Activated CD4-positive, alpha-beta memory T cell treated with anti-CD3 and anti-CD28 coated beads, Interleukin-2, amount 10 ng/mL, durations not matched to agents 7 days and 5 days (primary cell): ENCODE measurements at regions of chr17 and their contacts with region 1.

Region 1: DNA sequence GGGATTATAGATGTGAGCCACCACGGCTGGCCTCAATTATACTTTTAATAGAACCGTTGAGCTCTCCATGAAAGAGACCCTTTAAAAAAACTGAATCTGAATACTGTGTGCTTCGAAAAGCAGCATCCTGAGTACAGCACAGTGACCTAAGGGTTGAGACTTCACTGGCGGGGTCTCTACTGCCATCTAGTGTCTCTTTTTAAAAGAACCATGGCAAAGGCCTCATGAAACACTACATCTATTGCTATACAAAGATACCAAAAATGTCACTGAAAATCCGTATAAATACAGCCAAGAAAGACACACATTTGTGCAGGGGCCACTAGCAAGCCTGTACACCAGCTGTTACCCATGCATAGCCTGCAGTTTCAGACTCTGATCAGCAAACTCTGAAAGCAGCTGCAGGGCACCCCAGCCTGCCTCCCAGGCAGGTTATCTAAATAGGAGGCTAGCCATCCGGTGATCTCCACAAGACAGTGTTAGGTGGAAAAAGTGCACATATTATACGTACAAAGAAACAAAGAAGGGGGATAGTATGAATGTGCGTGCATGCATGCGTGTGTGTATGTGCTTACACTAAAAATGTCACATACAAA is 35.3 kb downstream of the NPLOC4 start:
- DNase-seq: peak; percentile 46
- H3K4me3 Mint-ChIP-seq: no peak overlapping the region
- H3K27ac Mint-ChIP-seq: peak overlapping the region; percentile 48
- H3K4me1 Mint-ChIP-seq: peaks cover 10% of the 10 kb centered on the region
- H3K27me3 Mint-ChIP-seq: no peaks in the 10 kb centered on the region

Region 2: DNA sequence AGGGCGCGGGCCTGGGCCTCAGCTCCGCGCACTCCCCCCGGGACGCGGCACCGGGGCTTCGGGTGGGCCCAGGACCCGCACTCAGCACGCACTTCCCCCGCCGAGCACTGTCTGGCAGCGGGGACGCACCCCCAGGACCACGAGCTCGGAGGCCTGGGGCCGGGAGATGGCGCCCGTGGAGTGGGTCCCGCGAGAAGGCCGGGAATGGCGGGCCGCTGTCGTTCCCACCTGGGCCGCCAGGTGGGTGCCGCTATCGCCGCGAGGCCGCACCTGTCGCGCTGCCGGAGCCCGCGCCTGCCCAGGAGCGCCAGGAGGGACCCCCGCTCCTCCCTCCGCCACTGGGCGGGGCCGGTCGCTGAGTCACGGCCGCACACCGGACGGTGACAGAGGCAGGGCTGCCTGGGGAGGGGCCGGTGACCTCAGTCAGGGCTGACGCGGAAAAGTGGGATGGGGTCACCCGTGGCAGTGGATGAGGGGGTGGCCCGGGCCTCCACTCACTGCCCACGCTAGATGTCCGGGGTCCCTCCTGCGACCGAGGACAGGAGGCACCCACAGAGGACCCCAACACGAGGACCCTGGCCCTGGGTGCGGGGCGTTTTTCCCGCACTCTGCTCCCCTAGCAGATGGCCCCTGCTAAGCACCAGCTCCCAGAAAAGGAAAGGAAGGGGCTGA is 82.2 kb before region 1 on chr17:
- CTCF ChIA-PET with region 1: interaction called, 14 read pairs
- POLR2A ChIA-PET with region 1: no interaction called
- DNase-seq: peak; percentile 70
- H3K4me3 Mint-ChIP-seq: peak overlapping the region; percentile 13
- H3K27ac Mint-ChIP-seq: no peak overlapping the region
- H3K4me1 Mint-ChIP-seq: peaks cover 34% of the 10 kb centered on the region
- H3K27me3 Mint-ChIP-seq: peaks cover 11% of the 10 kb centered on the region

Region 3: DNA sequence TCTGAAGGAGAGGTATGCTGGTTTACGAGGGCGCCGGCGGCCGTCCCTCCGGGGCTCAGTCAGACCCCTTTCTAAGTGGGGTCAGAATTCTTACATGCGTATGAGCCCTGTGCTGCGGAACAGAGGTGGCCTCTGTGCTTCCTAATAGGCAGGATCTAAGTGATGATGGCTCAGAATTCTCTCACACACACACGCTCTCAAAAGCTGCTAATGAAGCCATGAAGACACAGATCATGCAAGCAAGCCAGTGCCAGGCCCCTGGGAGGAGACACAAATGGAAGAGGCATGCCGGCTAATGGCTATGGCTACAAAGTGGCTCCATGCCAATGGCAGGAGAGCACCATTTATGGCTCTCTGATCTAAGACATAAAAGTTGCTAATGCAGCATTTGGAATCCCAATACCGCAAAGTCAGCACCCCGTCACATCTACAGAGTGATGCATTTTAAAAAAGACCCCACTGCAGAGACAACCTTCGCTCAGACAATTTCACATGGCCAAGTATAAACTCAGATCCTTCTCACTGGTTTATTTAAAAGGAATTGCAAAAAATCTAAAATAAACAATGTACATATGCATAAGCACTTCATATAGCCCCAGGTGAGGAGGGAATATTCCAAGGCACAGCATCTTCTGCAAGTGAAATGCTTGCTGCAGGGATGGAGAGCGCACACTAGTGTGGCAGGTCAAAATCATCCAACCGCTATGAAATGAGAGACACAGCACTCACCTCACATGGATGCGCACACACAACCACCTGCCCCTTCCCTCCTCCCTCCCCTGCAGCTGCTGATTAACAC is 10.7 kb after region 1 on chr17:
- CTCF ChIA-PET with region 1: interaction called, 17 read pairs
- POLR2A ChIA-PET with region 1: interaction called, 4 read pairs
- DNase-seq: no peak
- H3K4me3 Mint-ChIP-seq: no peak overlapping the region
- H3K27ac Mint-ChIP-seq: no peak overlapping the region
- H3K4me1 Mint-ChIP-seq: peaks cover 26% of the 10 kb centered on the region
- H3K27me3 Mint-ChIP-seq: no peaks in the 10 kb centered on the region